Activated CD4-positive, alpha-beta T cell treated with anti-CD3 and anti-CD28 coated beads for 36 hours (primary cell): ENCODE measurements at regions of chr15 and their contacts with region 1.

Region 1: DNA sequence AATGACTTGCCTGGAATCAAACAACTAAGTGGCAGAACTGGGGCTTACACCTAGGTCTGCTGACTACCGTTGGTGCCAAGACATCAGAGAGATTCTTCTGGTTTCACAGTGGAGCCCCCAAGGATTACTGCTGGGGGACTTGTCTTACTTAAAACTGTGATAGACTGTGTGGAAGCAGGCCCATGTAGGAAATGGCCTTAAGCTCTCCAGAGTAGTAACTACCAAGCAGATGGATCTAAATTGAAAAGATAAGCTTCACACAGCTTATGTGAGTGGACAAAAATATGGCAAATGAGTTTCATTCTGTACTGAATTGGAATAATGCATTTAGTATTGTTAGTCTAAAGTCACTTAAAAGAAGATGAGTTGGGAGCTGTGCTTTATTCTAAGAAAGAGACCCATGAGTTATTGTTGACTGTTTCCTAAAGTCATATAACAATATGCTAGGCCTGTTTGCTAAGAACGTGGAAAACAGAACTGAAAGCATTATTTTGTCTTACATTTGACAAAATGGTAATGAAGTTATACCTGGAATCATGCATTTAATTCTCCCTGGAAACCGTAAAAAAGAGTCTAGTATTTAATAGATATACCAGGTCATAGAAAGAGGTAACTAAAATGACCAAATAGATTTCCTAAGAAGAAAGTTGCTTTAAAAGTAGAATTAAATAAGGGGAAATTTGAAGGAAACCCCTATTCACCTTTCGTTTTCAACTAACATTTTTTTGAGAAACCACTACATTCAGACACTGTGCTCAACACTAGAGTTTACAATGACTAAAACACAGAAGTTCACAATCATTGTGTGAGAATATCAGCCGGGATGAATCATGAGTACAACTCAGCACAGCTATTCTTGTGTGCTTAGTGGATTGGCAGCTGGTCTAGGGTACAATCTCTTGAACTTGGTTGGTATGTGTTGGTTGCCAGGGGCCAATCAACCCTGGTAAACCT is 13.0 kb upstream of the MAPK6 start:
- DNase-seq: peak; percentile 54
- ATAC-seq: peak; percentile 90
- H3K4me3 Mint-ChIP-seq: peak overlapping the region; percentile 6
- H3K27ac Mint-ChIP-seq: peak overlapping the region; percentile 56
- H3K4me1 Mint-ChIP-seq: peaks cover 64% of the 10 kb centered on the region
- H3K27me3 Mint-ChIP-seq: no peaks in the 10 kb centered on the region

Region 2: GRCh38 chr15:51861557-51862359 is 144.3 kb before region 1 on chr15:
- CTCF ChIA-PET with region 1: no interaction called
- POLR2A ChIA-PET with region 1: no interaction called
- intact Hi-C with region 1: loop called in 1 of 2 experiments (anchors 2 kb)
- DNase-seq: peak; percentile 77
- ATAC-seq: peak; percentile 84
- H3K4me3 Mint-ChIP-seq: peak overlapping the region; percentile 51
- H3K27ac Mint-ChIP-seq: peak overlapping the region; percentile 75
- H3K4me1 Mint-ChIP-seq: peaks cover 65% of the 10 kb centered on the region
- H3K27me3 Mint-ChIP-seq: no peaks in the 10 kb centered on the region

Region 3: DNA sequence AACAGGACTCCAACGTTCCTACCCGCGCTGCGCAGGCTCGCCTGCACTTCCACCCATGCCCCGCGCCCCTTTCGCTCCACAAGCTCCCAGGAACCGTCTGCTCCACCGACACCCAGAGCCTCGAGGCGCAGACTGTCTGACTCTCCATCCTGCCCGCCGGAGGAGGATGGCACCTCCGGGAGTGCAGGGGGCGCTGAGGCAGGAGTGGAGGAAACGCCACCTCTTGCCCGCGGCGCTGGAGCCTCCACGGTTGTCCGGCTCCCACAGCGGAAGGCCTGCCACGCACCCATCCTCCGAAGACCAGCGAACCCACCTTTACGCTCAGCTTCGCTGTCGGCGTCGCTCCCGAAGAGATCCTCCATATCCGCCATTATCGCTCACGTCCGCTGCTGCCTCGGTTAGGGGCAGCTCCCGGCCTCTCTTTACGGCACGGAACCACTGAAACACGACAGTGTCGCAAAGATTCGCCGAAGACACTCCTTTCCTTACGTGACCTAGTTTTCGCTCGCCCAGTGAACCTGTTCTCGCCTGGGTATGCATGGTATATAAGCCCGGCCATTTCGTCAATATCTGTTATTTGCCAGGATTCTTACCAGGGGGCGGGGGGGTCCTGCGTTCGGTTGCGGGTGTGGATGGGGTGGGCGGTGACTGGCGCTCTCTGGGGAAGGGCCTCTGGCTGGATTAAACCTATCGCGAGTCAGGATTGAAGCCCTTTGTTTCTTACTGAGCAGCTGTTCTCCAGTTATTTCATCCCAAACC is 34.5 kb before region 1 on chr15 and contains the start of gene LEO1:
- CTCF ChIA-PET with region 1: no interaction called
- POLR2A ChIA-PET with region 1: interaction called, 3 read pairs
- intact Hi-C with region 1: loop called in 1 of 2 experiments (anchors 5 kb)
- DNase-seq: peak; percentile 93
- ATAC-seq: peak; percentile 95
- H3K4me3 Mint-ChIP-seq: peak within 1 kb of the TSS; percentile 100
- H3K27ac Mint-ChIP-seq: peak within 1 kb of the TSS; percentile 94
- H3K4me1 Mint-ChIP-seq: peaks cover 21% of the 10 kb centered on the region
- H3K27me3 Mint-ChIP-seq: no peaks in the 10 kb centered on the region
- total RNA-seq, gene LEO1: 31.4 to 40.0 TPM

Region 4: GRCh38 chr15:52018693-52019387 is 12.8 kb after region 1 on chr15 and contains the start of gene MAPK6:
- CTCF ChIA-PET with region 1: interaction called, 8 read pairs
- POLR2A ChIA-PET with region 1: no interaction called
- intact Hi-C with region 1: loop called (anchors 1 kb)
- DNase-seq: peak; percentile 97
- ATAC-seq: peak; percentile 76
- H3K4me3 Mint-ChIP-seq: peak within 1 kb of the TSS; percentile 86
- H3K27ac Mint-ChIP-seq: peak within 1 kb of the TSS; percentile 96
- H3K4me1 Mint-ChIP-seq: peaks cover 38% of the 10 kb centered on the region
- H3K27me3 Mint-ChIP-seq: peaks cover 5% of the 10 kb centered on the region
- total RNA-seq, gene MAPK6: 27.3 to 28.1 TPM

Region 5: GRCh38 chr15:52039925-52040781 is 34.1 kb after region 1 on chr15:
- CTCF ChIA-PET with region 1: no interaction called
- POLR2A ChIA-PET with region 1: no interaction called
- intact Hi-C with region 1: loop called in 1 of 2 experiments (anchors 5 kb)
- DNase-seq: no peak
- ATAC-seq: no peak
- H3K4me3 Mint-ChIP-seq: no peak overlapping the region
- H3K27ac Mint-ChIP-seq: peak overlapping the region; percentile 34
- H3K4me1 Mint-ChIP-seq: peaks cover 58% of the 10 kb centered on the region
- H3K27me3 Mint-ChIP-seq: no peaks in the 10 kb centered on the region